K562 (cell line): ENCODE measurements at regions of chr22 and their contacts with region 1.

Region 1: GRCh38 chr22:22030493-22031182 is 48.1 kb upstream of the TOP3B start:
- DNase-seq: peak; percentile 69 to 90 (median 80)
- ATAC-seq: peak; percentile 83
- H3K4me3 ChIP-seq: no peak overlapping the region
- H3K27ac ChIP-seq: no peak overlapping the region
- H3K4me1 ChIP-seq: peaks cover 3 to 10% of the 10 kb centered on the region in 2 experiments; a peak in 4 of 5 replicates
- H3K27me3 ChIP-seq: peaks cover 12 to 44% of the 10 kb centered on the region in 2 experiments; a peak in 4 of 5 replicates
- CTCF ChIP-seq: no peak
- EP300 ChIP-seq: no peak
- POLR2A ChIP-seq: no peak
- RAD21 ChIP-seq: no peak

Region 2: GRCh38 chr22:22043296-22044078 is 12.8 kb after region 1 on chr22:
- CTCF ChIA-PET with region 1: no interaction called
- POLR2A ChIA-PET with region 1: interaction called, 88 read pairs
- in situ Hi-C with region 1: no loop called
- intact Hi-C with region 1: no loop called
- DNase-seq: peak in 1 of 4 experiments; percentile 63
- ATAC-seq: peak; percentile 72
- H3K4me3 ChIP-seq: no peak overlapping the region
- H3K27ac ChIP-seq: no peak overlapping the region
- H3K4me1 ChIP-seq: peaks cover 0 to 5% of the 10 kb centered on the region in 2 experiments; a peak in 2 of 5 replicates
- H3K27me3 ChIP-seq: peaks cover 28 to 40% of the 10 kb centered on the region in 2 experiments
- CTCF ChIP-seq: no peak
- EP300 ChIP-seq: no peak
- POLR2A ChIP-seq: no peak
- RAD21 ChIP-seq: no peak

Region 3: DNA sequence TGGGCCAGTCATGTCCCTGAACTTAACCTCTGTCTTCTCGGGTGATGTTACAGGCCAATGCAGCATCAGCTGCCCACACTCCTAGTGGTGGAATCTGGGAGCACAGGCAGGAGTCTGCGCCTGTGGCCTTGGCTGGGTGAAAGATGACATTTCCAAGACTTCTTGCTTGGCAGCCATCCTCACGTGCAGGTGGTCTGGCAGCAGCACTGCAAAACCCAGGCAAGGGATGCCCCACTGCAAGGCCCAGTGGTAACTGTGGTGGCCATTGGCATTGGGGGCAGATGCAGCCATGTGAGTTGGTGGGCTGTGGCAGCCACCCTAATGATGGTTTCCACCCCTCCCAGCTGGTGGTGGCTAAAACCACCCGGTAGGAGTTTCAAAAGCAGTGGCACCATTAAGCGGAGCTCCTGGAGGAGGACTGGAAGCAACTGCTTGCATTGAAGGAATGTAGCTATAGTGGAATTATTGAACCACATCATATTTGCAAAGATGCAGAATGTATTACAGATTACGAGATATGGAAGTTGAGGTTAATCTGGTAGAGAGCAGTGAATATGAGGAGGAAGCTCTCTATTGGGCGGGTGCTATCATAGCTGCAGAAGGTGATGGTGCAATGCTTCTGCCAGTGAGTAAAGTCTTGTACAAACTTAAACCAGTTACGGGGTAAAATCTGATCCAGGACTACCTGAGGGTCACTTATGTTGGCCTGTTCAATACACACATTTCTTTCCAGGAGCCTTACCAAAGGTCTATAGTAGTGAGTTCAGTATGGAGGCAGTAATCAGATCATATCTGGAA is 72.6 kb after region 1 on chr22:
- CTCF ChIA-PET with region 1: no interaction called
- POLR2A ChIA-PET with region 1: interaction called, 3 read pairs
- in situ Hi-C with region 1: no loop called
- intact Hi-C with region 1: loop called (anchors 5 kb)
- DNase-seq: peak; percentile 86 to 97 (median 93)
- ATAC-seq: peak; percentile 87
- H3K4me3 ChIP-seq: no peak overlapping the region
- H3K27ac ChIP-seq: no peak overlapping the region
- H3K4me1 ChIP-seq: peaks cover 0 to 2% of the 10 kb centered on the region in 2 experiments; a peak in 2 of 5 replicates
- H3K27me3 ChIP-seq: peaks cover 21 to 37% of the 10 kb centered on the region in 2 experiments
- CTCF ChIP-seq: no peak
- EP300 ChIP-seq: no peak
- POLR2A ChIP-seq: no peak
- RAD21 ChIP-seq: no peak

Region 4: DNA sequence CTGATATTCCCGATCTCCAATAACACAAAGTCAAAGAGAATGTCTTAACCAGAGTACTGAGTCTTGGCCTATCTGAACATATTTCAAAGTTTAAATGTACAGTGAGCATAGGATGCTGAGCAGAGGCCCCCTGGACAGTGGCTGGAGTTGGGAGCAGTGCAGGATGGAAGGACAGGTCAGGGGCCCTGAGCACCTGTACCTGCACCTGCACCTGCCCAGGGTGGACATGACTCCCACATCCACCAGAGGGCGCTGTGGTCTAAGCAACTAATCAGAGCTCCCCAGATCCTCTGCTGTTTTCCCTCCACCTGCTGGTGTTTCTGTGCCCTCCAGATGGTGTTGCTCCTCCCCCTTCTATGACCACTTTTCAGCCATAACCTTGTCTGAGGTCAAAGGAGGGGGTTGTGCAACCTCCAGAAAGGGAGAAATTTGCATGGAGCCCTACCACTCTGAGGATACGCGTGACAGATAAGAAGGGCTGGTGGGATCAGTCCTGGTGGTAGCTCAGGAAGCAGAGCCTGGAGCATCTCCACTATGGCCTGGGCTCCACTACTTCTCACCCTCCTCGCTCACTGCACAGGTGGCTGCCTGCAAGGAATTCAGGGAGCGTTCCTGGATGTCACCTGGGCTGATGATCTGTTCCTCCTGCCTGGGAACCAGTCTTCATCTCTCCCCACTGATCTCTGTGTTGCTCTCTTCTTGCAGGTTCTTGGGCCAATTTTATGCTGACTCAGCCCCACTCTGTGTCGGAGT is 164.8 kb after region 1 on chr22:
- CTCF ChIA-PET with region 1: interaction called, 20 read pairs
- POLR2A ChIA-PET with region 1: no interaction called
- in situ Hi-C with region 1: no loop called
- intact Hi-C with region 1: loop called (anchors 1 kb)
- DNase-seq: peak; percentile 99 to 100 (median 100)
- ATAC-seq: peak; percentile 99
- H3K4me3 ChIP-seq: no peak overlapping the region
- H3K27ac ChIP-seq: no peak overlapping the region
- H3K4me1 ChIP-seq: peaks cover 0 to 3% of the 10 kb centered on the region in 2 experiments; a peak in 1 of 5 replicates
- H3K27me3 ChIP-seq: peaks cover 14 to 33% of the 10 kb centered on the region in 2 experiments; a peak in 4 of 5 replicates
- CTCF ChIP-seq: peak; percentile 100
- EP300 ChIP-seq: peak; percentile 69
- POLR2A ChIP-seq: no peak
- RAD21 ChIP-seq: peak; percentile 93 to 100